Naive thymus-derived CD8-positive, alpha-beta T cell (primary cell): ENCODE measurements at regions of chr22 and their contacts with region 1.

Region 1: GRCh38 chr22:36048911-36049677 is 20.5 kb upstream of the RBFOX2 start:
- DNase-seq: no peak
- ATAC-seq: no peak
- H3K4me3 Mint-ChIP-seq: no peak overlapping the region
- H3K27ac Mint-ChIP-seq: no peak overlapping the region
- H3K4me1 Mint-ChIP-seq: no peaks in the 10 kb centered on the region
- H3K27me3 Mint-ChIP-seq: peaks cover 0 to 8% (median 8%) of the 10 kb centered on the region in 5 donors

Region 2: DNA sequence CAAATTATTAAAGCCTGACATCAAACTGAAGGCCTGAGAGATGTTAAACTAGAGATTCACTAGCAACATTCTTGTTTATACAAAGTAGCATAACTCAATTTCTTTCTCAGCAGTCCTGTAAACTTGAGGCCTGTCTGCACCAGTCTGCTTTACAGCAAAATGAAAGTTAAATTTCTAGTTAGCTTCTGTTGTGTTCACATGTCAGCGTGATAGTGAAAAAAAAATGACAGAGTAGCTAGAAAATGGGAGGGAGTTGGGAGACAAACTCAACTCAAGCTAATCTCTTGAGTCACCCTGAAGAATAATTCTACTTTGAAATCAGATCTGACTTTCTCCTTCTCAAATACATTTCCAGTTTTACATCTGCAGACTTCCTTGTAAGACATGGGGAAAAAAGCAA is 26.9 kb before region 1 on chr22:
- POLR2A ChIA-PET with region 1: no interaction called
- DNase-seq: no peak
- ATAC-seq: no peak
- H3K4me3 Mint-ChIP-seq: no peak overlapping the region
- H3K27ac Mint-ChIP-seq: peak overlapping the region in 7 of 10 donors; percentile 15 to 81 (median 32)
- H3K4me1 Mint-ChIP-seq: peaks cover 3 to 29% (median 12%) of the 10 kb centered on the region in 4 donors
- H3K27me3 Mint-ChIP-seq: peaks cover 0 to 18% (median 0%) of the 10 kb centered on the region in 5 donors

Region 3: DNA sequence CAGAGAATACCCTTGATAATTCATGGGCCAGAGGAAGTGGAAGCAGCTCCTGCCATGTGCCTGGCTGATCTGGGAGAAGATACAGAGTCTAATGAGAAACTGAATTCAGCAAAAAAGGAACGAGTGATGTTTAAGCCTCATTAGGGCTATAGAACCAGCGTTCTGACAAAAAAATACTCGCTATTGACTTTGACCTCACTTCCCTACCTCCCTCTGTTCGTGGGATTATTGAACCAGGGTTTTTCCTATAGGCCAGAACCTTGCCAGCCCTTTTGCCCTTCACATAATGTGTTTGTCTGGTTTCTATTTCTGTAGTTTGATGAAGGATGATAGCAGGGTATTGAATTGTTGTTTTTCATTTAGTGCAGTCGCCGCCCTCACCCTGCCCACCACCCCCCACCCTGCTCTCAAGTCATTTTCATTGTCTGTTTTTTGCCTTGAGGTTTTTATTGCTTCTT is 12.9 kb before region 1 on chr22:
- POLR2A ChIA-PET with region 1: interaction called, 10 read pairs
- DNase-seq: no peak
- ATAC-seq: no peak
- H3K4me3 Mint-ChIP-seq: no peak overlapping the region
- H3K27ac Mint-ChIP-seq: no peak overlapping the region
- H3K4me1 Mint-ChIP-seq: no peaks in the 10 kb centered on the region
- H3K27me3 Mint-ChIP-seq: peaks cover 8 to 37% (median 31%) of the 10 kb centered on the region in 5 donors